ENCODE measurements at regions of chr17 and their contacts with region 1.

Region 1: GRCh38 chr17:40303009-40303657 is 5.8 kb upstream of the RARA start:
- H3K4me3 ChIP-seq: no peak overlapping the region
- H3K27ac ChIP-seq: no peak overlapping the region
- H3K4me1 ChIP-seq: peaks cover 25% of the 10 kb centered on the region
- CTCF ChIP-seq: peak; percentile 50

Region 2: DNA sequence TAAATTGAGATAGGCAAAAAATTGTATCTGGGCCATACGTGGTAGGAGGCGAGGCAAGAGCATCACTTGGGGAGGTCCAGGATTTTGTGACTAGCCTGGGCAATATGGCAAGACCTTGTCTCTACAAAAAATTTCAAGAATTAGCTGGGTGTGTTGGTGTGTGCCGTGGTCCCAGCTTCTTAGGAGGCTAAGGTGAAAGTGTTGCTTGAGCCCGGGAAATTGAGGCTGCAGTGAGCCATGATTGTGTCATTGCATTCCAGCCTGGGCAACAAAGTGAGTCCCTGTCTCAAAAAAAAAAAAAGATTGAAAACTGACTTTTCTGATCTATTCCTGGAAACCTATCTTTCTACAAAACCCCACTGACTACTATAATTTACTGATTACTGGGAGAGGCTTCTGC is 815.2 kb before region 1 on chr17:
- CTCF ChIA-PET with region 1: no interaction called
- POLR2A ChIA-PET with region 1: no interaction called
- H3K4me3 ChIP-seq: no peak overlapping the region
- H3K27ac ChIP-seq: no peak overlapping the region
- H3K4me1 ChIP-seq: 0 out of 2 replicates have a peak, but pooled peaks cover 3% of the 10 kb centered on the region
- CTCF ChIP-seq: no peak

Region 3: DNA sequence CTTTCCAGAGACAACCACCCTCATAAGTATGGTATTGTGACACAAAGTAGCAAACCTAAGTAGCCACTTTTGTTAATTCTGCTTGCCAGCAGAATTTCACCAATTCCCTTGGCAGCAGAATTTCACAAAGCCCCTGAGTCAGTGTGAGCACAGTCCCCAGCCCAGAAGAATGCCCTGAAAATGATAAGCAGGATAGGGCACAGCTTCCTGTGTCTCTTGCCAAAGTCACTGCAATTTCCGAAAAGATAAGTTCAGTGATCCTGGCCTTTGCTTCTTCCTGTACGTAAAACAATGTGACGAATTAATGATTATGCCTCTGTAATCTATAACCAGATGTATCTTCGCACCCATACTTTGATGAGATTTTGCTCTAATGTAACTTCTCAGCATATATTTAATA is 100.0 kb before region 1 on chr17:
- CTCF ChIA-PET with region 1: interaction called, 11 read pairs
- POLR2A ChIA-PET with region 1: no interaction called
- H3K4me3 ChIP-seq: no peak overlapping the region
- H3K27ac ChIP-seq: no peak overlapping the region
- H3K4me1 ChIP-seq: no peaks in the 10 kb centered on the region
- CTCF ChIP-seq: no peak

Region 4: GRCh38 chr17:40287494-40288369 is 15.4 kb before region 1 on chr17 and contains the start of gene CDC6:
- CTCF ChIA-PET with region 1: interaction called, 55 read pairs
- POLR2A ChIA-PET with region 1: interaction called, 13 read pairs
- H3K4me3 ChIP-seq: peak within 1 kb of the TSS; percentile 96
- H3K27ac ChIP-seq: peak within 1 kb of the TSS; percentile 95
- H3K4me1 ChIP-seq: peaks cover 3% of the 10 kb centered on the region
- CTCF ChIP-seq: 0 out of 2 replicates have a peak, but pooled peaks have one; percentile 9

Region 5: GRCh38 chr17:40317880-40318829 is 15.0 kb after region 1 on chr17:
- CTCF ChIA-PET with region 1: interaction called, 85 read pairs
- POLR2A ChIA-PET with region 1: interaction called, 43 read pairs
- H3K4me3 ChIP-seq: peak overlapping the region; percentile 66
- H3K27ac ChIP-seq: peak overlapping the region; percentile 86
- H3K4me1 ChIP-seq: peaks cover 44% of the 10 kb centered on the region
- CTCF ChIP-seq: no peak

Region 6: DNA sequence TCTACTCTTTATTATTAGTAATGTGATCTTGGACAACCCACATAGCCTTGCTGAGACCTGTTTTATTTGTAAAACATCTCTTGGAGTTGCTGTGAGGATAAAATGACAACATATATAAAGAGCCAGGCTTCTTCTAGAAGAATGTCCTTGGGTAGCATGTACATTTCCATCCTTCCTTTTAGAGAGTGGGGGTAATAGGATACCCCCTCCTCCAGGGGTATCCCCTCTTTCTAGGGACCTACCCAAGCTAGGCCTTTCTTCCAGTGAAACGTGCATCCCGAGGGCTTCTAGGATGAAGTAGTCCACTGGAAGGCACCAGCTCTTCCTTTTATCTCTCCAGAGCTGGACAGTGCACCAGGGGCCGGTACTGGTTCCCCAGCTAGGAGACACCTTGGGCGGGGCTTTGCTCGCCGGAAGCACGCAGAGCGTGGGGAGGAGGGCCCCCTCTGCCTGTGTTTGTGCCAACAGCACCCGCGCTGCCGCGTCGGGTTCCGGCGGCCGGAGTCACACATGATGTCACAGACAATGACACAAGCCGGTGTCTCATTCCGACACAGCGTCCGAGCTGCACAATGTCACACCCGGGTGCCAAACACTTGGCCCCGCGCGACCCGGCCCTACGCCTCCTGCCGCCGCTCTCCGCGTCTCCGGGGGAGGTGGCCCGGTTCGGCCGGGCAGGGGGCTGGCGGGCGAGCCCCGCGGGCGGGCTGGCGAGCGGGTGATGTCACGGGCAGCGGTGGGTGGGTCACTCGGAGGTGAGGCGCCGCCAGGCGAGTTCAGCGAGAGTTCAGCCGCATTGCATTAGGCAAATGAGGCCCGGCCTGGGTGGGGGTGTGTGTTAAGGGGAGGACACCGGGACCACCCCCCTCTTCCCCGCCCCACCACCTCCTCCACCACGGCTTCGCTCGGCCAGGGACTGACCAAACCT is 38.0 kb after region 1 on chr17:
- CTCF ChIA-PET with region 1: interaction called, 27 read pairs
- POLR2A ChIA-PET with region 1: interaction called, 19 read pairs
- H3K4me3 ChIP-seq: peak overlapping the region; percentile 69
- H3K27ac ChIP-seq: peak overlapping the region; percentile 77
- H3K4me1 ChIP-seq: peaks cover 28% of the 10 kb centered on the region
- CTCF ChIP-seq: peak; percentile 52; the same call in 1 of the 2 replicates

Region 7: DNA sequence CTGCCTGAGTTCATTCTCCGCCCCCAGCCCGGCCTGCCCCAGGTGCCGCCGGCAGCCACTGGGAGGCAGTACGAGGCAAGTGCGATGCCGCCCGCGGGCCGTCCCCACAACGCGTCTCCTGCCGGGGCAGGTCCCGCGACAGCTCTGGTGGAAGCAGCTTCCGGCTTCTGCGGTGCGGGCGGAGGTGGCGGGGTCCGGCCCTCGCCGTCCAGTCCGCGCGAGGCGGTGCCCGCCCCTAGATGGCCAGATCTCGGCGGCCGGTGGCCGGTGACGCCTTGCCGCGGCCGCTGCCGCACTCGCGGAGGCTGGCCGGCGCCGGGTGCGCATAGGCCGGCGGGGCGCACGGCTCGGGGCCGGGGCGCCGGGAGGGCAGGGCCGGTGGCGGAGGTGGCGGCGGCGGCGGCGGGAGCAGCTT is 59.6 kb after region 1 on chr17:
- CTCF ChIA-PET with region 1: interaction called, 453 read pairs
- POLR2A ChIA-PET with region 1: no interaction called
- H3K4me3 ChIP-seq: peak overlapping the region; percentile 50
- H3K27ac ChIP-seq: peak overlapping the region; percentile 70; the same call in 1 of the 2 replicates
- H3K4me1 ChIP-seq: no peaks in the 10 kb centered on the region
- CTCF ChIP-seq: peak; percentile 97